ENCODE measurements at regions of chr19 and their contacts with region 1.

Region 1: GRCh38 chr19:43463381-43464136 is 1.8 kb downstream of the LYPD3 start:
- DNase-seq: peak; percentile 96
- H3K4me3 Mint-ChIP-seq: peak overlapping the region; percentile 89
- H3K27ac Mint-ChIP-seq: peak overlapping the region; percentile 96
- H3K4me1 Mint-ChIP-seq: peaks cover 29% of the 10 kb centered on the region
- H3K27me3 Mint-ChIP-seq: no peaks in the 10 kb centered on the region

Region 2: DNA sequence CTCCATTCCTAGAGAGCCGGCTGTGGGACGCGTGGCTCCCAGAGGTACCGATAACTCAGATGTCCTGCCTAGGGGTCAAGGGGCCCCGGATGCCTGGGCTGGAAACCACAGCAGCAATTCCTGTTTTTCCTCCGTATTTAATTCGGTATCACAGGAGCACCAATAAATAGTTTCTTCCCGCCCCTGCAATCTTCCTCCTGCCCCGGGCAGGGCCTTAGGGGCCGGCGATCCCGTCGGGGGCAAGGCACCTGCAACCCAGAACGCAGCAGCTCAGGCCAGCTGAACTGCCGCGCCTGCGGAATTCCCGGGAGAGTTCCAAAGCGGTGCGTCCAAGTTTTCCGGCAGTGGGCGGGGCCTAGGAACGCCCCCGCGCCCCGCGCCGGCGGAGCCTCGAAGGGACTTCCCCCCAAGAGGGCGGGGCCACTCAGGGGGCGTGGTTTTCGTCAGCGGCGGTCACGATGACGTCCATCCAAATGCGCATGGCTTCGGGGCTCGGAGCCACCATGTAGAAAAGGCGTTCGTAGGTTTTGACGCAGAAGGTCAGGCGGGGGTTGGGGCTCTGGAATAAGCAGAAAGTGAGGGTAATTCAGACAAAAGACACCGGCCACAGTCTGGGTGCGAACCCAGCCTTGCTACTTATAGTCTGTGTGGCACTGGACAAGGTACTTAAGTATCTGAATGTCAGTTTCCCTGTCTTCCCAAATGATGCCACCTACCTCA is 11.6 kb after region 1 on chr19:
- intact Hi-C with region 1: loop called (anchors 1 kb)
- DNase-seq: peak; percentile 89
- H3K4me3 Mint-ChIP-seq: peak overlapping the region; percentile 78
- H3K27ac Mint-ChIP-seq: peak overlapping the region; percentile 94
- H3K4me1 Mint-ChIP-seq: peaks cover 18% of the 10 kb centered on the region
- H3K27me3 Mint-ChIP-seq: no peaks in the 10 kb centered on the region

Region 3: GRCh38 chr19:43503501-43504425 is 40.2 kb after region 1 on chr19:
- intact Hi-C with region 1: loop called (anchors 1 kb)
- DNase-seq: peak; percentile 96
- H3K4me3 Mint-ChIP-seq: peak overlapping the region; percentile 87
- H3K27ac Mint-ChIP-seq: peak overlapping the region; percentile 93
- H3K4me1 Mint-ChIP-seq: peaks cover 20% of the 10 kb centered on the region
- H3K27me3 Mint-ChIP-seq: no peaks in the 10 kb centered on the region

Region 4: GRCh38 chr19:43526884-43527859 is 63.6 kb after region 1 on chr19 and contains the start of gene ETHE1:
- intact Hi-C with region 1: loop called (anchors 1 kb)
- DNase-seq: peak; percentile 76
- H3K4me3 Mint-ChIP-seq: peak within 1 kb of the TSS; percentile 87
- H3K27ac Mint-ChIP-seq: peak within 1 kb of the TSS; percentile 97
- H3K4me1 Mint-ChIP-seq: peaks cover 12% of the 10 kb centered on the region
- H3K27me3 Mint-ChIP-seq: no peaks in the 10 kb centered on the region
- total RNA-seq, gene ETHE1: 64.6 and 65.5 TPM in 2 replicates

Region 5: GRCh38 chr19:43532962-43533545 is 69.5 kb after region 1 on chr19 and contains the start of gene ZNF575:
- intact Hi-C with region 1: loop called (anchors 2 kb)
- DNase-seq: peak; percentile 85
- H3K4me3 Mint-ChIP-seq: peak within 1 kb of the TSS; percentile 87
- H3K27ac Mint-ChIP-seq: peak within 1 kb of the TSS; percentile 90
- H3K4me1 Mint-ChIP-seq: peaks cover 8% of the 10 kb centered on the region
- H3K27me3 Mint-ChIP-seq: no peaks in the 10 kb centered on the region
- total RNA-seq, gene ZNF575: 1.7 and 2.1 TPM in 2 replicates

Region 6: DNA sequence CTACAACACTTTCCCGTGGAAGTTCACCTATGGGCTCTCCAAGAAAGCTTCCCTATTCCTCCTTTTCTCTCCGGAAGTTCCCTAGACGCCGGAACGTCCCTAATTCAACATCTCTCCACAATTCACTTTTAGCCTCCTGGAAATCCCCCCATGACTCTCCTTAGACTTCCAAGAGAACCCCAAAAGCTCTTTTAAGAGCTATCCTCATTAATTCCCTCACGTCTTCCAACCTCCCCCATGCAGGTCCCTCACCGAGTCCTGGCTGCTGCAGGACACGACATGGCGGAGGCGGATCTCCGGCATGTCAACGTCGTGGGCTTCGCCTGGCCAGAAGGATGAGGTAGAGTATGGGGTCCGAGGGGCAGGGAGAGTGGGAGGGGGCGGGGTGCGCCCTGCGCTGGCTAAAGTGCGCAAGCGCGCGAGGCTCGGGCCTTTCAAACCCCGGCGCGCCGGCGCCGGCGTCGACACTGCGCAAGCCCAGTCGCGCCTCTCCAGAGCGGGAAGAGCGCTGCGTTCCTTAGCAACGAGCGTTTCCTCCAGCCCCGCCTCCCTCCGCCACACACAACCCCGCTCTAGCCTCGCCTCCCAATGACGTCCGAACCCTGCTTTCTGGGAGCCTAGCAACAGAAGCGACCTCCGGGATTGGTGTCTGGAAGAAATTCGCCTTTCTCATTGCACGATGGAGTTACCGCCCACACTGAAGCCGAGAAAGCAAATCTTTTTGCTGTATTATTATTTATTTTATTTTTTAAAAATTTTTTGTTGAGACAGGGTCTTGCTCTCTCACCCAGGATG is 111.8 kb after region 1 on chr19 and contains the starts of genes PINLYP and XRCC1:
- intact Hi-C with region 1: loop called (anchors 5 kb)
- DNase-seq: peak; percentile 95
- H3K4me3 Mint-ChIP-seq: peak within 1 kb of the TSS; percentile 97
- H3K27ac Mint-ChIP-seq: peak within 1 kb of the TSS; percentile 90
- H3K4me1 Mint-ChIP-seq: peaks cover 28% of the 10 kb centered on the region
- H3K27me3 Mint-ChIP-seq: no peaks in the 10 kb centered on the region
- total RNA-seq, gene PINLYP: 9.0 and 9.1 TPM in 2 replicates
- total RNA-seq, gene XRCC1: 27.3 and 27.5 TPM in 2 replicates

Region 7: DNA sequence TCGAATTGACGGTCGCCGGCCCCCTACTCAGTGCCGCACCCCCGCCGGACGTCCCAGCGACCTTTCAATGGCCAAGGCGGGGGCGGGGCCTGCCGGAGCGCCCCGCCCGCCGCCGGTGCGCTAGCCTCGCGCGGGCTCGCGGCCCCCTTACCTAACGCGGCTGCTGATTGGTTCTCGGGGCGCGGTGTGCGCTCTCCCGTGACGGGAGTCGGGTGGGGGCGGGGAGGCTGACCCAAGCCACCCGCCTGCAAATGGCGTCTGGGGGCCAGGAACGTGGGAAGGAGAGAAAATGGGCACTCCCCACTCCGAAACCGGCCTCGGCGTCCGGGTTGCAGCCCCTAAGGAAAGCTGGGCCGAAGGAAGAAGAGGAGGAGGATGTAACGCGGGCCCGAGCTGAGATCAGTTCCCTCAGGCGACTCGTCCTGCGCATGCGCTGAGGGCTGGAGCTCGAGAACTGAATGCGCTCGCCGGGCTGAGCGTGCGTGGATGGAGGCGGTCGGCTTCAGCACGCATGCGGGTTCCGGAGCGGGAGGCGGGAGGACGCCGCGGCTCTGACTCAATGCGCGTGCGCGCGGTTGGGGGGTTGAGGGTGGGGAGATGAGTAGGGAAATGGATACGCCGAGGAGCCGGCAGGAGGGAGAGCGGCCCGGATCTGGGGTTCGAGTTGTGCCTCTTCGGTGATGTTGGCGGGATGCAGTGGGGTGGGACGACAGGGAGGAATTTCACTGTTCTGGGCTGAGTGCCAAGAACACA is 291.1 kb after region 1 on chr19 and contains the start of gene SMG9:
- intact Hi-C with region 1: loop called (anchors 1 kb)
- DNase-seq: peak; percentile 99
- H3K4me3 Mint-ChIP-seq: peak within 1 kb of the TSS; percentile 96
- H3K27ac Mint-ChIP-seq: peak within 1 kb of the TSS; percentile 100
- H3K4me1 Mint-ChIP-seq: peaks cover 50% of the 10 kb centered on the region
- H3K27me3 Mint-ChIP-seq: no peaks in the 10 kb centered on the region
- total RNA-seq, gene SMG9: 69.1 and 73.1 TPM in 2 replicates

Measured in activated T-helper 2 cell treated with anti-CD3 and anti-CD28 coated beads, Interferon-gamma antibody, Interleukin-2, Interleukin-4, amounts not matched to agents 10 μg/mL and 5 μg/mL and 100 μg/mL, durations not matched to agents 14 hours and 24 hours and 36 hours (primary cell).